Activated CD4-positive, alpha-beta T cell treated with anti-CD3 and anti-CD28 coated beads, Interleukin-2, amount 10 ng/mL, durations not matched to agents 24 days and 14 days (primary cell): ENCODE measurements at regions of chr12 and their contacts with region 1.

Region 1: DNA sequence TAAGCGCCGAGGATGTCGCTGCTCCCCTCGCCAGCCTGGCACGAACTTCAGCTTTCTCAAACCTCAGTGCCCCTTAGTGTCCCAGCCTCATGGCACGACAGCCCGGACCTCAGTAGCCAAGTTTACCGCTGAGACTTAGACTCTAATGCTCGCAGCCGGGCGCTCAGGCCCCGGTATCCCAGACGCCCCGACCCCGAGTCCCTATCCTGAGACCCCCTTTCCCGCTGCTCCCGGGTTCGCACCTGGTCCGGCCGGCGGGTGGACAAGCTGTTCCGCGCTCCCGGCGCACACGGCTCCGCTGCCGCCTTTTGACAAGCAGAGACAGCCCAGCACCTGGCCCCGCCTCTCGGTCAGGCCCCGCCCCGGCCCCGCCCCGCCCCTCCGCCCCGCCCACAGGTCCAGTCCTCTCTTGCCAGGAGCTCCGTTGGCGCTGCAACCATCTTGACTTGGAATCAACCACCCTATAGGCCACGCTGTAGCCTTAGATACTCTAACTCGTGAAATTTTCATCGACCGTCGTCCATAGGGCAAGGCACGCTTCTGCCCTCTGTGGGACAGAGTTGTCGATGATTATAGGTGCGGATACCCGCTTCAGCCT is at the start of gene VDR:
- DNase-seq: peak; percentile 90
- H3K4me3 Mint-ChIP-seq: peak within 1 kb of the TSS; percentile 95
- H3K27ac Mint-ChIP-seq: peak within 1 kb of the TSS; percentile 92
- H3K4me1 Mint-ChIP-seq: peaks cover 38% of the 10 kb centered on the region
- H3K27me3 Mint-ChIP-seq: peaks cover 32% of the 10 kb centered on the region
- total RNA-seq, gene VDR: 267 and 277 TPM in 2 replicates

Region 2: DNA sequence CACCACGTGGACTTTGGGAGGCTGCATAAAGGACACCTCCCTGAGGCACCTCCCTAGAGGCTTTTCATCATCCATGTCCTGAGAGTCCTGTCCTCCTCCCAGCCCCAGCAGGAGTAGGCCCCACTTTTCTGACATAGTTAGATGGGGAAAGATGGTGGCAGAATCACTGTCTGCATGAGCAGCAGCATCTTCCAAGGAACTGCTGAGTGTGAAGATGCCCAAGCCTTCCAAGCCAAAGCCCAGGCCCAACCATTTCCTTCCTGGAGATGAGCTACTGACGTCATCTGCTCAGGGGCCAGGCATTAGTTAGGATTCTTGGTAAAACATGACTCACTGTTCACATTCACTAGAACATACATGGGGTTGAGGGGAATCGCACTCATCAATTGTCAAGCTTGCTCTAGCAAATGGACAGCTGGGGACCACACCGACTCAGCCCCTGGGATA is 37.3 kb before region 1 on chr12:
- intact Hi-C with region 1: loop called (anchors 1 kb)
- DNase-seq: peak; percentile 84
- H3K4me3 Mint-ChIP-seq: peak overlapping the region; percentile 64
- H3K27ac Mint-ChIP-seq: peak overlapping the region; percentile 93
- H3K4me1 Mint-ChIP-seq: peaks cover 79% of the 10 kb centered on the region
- H3K27me3 Mint-ChIP-seq: no peaks in the 10 kb centered on the region

Region 3: DNA sequence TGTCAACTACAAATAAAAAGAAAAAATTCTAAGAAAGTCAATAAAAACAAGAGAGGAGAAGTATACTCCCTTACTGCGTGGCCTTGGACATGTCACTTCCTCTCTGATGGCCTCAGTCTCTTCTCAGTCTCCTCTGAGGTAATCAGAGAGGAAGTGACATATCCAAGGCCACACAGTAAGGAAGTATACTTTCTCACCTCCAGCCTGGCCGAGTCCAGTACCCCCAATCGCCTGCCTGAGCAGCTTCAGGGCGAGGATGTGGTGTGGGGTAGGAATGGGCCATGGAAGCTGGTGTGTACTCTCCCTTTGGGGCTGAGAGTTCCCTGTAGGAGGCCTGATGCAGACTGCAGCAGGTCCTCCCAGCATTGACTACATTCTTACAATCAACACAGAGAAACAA is 15.8 kb before region 1 on chr12:
- intact Hi-C with region 1: loop called (anchors 1 kb)
- DNase-seq: peak; percentile 89
- H3K4me3 Mint-ChIP-seq: peak overlapping the region; percentile 91
- H3K27ac Mint-ChIP-seq: peak overlapping the region; percentile 99
- H3K4me1 Mint-ChIP-seq: peaks cover 91% of the 10 kb centered on the region
- H3K27me3 Mint-ChIP-seq: no peaks in the 10 kb centered on the region

Region 4: GRCh38 chr12:47920913-47921312 is 16.1 kb after region 1 on chr12:
- intact Hi-C with region 1: no loop called
- DNase-seq: no peak
- H3K4me3 Mint-ChIP-seq: no peak overlapping the region
- H3K27ac Mint-ChIP-seq: no peak overlapping the region
- H3K4me1 Mint-ChIP-seq: no peaks in the 10 kb centered on the region
- H3K27me3 Mint-ChIP-seq: peaks cover 43% of the 10 kb centered on the region

Region 5: GRCh38 chr12:47949441-47950308 is 44.9 kb after region 1 on chr12:
- intact Hi-C with region 1: loop called (anchors 2 kb)
- DNase-seq: peak; percentile 86
- H3K4me3 Mint-ChIP-seq: no peak overlapping the region
- H3K27ac Mint-ChIP-seq: peak overlapping the region; percentile 45
- H3K4me1 Mint-ChIP-seq: peaks cover 15% of the 10 kb centered on the region
- H3K27me3 Mint-ChIP-seq: peaks cover 10% of the 10 kb centered on the region

Region 6: DNA sequence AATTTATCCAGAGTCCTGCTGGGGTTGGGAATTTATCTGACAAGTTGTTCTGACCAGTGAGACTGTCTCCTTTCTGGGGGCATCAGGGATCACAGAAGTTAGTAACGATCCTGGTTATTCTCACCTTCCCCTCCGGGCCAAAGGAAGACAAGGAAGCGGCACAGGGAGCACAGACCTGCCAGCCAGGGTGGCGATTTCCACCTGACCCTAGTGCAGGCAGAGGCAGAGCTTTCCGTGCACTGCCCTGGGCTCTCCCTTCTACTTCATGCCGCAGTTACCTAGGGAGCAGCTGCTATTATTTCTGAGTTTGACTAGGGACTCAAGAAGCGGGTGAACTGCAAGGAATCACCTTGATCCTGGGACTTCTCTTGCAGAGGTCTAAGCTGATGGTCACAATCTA is 66.0 kb after region 1 on chr12:
- intact Hi-C with region 1: no loop called
- DNase-seq: no peak
- H3K4me3 Mint-ChIP-seq: no peak overlapping the region
- H3K27ac Mint-ChIP-seq: no peak overlapping the region
- H3K4me1 Mint-ChIP-seq: peaks cover 6% of the 10 kb centered on the region
- H3K27me3 Mint-ChIP-seq: no peaks in the 10 kb centered on the region

Region 7: DNA sequence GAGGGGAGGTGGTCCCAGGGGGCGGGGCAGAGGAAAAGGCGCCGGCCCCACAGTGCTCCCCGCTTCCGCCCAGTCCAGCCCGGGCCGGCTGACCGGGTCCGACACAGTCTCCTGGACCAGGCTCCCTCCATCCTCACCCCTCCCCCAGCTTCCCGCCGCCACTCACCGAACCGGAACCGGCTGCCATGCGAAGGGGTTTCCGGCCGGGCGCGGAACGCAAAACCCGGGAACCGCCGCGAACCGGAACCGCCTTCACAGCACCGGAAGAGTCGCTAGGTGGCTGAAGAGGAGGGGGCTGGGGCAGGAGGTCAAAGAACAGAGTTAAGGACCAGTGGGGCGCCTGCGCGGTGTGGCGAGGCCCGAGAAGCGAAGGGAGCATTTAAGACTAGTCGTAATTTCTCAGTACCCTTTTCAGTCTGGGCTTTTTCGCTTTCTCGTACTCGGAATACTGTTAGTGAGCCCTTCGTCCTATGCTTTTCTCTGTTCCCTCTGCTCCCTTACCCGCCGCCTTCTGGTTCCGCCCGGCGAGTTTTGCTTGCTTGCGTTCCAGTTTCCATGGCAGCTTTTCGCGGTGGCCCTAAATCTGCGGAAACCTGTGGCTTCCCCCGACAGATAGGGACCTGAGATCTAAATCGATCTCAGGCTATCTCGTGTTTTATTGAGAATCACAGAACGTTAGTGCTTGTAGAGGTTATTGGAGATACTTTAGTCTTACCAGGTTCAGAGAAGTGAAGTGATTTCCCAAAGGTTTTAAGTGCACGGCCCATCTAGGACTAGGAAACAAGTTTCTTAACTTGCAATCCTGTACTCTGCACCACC is 201.3 kb after region 1 on chr12 and contains the start of gene SENP1:
- intact Hi-C with region 1: loop called (anchors 5 kb)
- DNase-seq: peak; percentile 97
- H3K4me3 Mint-ChIP-seq: peak within 1 kb of the TSS; percentile 97
- H3K27ac Mint-ChIP-seq: peak within 1 kb of the TSS; percentile 95
- H3K4me1 Mint-ChIP-seq: peaks cover 39% of the 10 kb centered on the region
- H3K27me3 Mint-ChIP-seq: peaks cover 6% of the 10 kb centered on the region
- total RNA-seq, gene SENP1: 55.4 and 58.6 TPM in 2 replicates

Region 8: GRCh38 chr12:48379780-48380179 is 475.0 kb after region 1 on chr12:
- intact Hi-C with region 1: no loop called
- DNase-seq: no peak
- H3K4me3 Mint-ChIP-seq: no peak overlapping the region
- H3K27ac Mint-ChIP-seq: no peak overlapping the region
- H3K4me1 Mint-ChIP-seq: no peaks in the 10 kb centered on the region
- H3K27me3 Mint-ChIP-seq: peaks cover 5% of the 10 kb centered on the region